ENCODE measurements at regions of chr4 and their contacts with region 1.

Region 1: DNA sequence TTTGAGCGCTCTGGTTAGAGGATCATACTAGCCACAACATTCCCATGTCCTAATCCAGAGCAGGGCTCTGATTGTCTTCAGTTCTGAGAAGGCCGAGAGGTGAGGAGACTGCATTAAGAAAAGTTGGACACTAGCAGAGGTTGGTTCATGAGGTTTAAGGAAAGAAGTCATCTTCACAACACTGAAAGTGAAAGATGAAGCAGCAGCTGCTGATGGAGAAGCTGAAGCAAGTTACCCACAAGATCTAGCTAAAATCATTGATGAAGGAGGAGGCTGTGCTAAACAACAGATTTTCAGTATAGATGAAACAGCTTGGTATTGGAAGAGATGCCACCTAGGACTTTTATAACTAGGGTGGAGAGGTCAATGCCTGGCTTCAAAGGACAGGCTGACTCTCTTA is 36.8 kb downstream of the RAP1GDS1 start:
- DNase-seq: no peak
- ATAC-seq: no peak
- H3K4me3 ChIP-seq: no peak overlapping the region
- H3K27ac ChIP-seq: no peak overlapping the region
- H3K4me1 ChIP-seq: peaks cover 0 to 22% (median 9%) of the 10 kb centered on the region in 9 donors
- H3K27me3 ChIP-seq: no peaks in the 10 kb centered on the region
- CTCF ChIP-seq: no peak

Region 2: GRCh38 chr4:98260579-98261290 is 37.3 kb before region 1 on chr4:
- intact Hi-C with region 1: loop called in 1 of 10 experiments (anchors 5 kb)
- DNase-seq: peak; percentile 96 to 97
- ATAC-seq: peak; percentile 97 to 99 (median 98)
- H3K4me3 ChIP-seq: peak overlapping the region; percentile 46 to 93 (median 82)
- H3K27ac ChIP-seq: peak overlapping the region; percentile 74 to 100 (median 98)
- H3K4me1 ChIP-seq: peaks cover 0 to 41% (median 19%) of the 10 kb centered on the region in 9 donors
- H3K27me3 ChIP-seq: no peaks in the 10 kb centered on the region
- CTCF ChIP-seq: no peak

Region 3: GRCh38 chr4:98318521-98318920 is 20.5 kb after region 1 on chr4:
- intact Hi-C with region 1: no loop called
- DNase-seq: no peak
- ATAC-seq: no peak
- H3K4me3 ChIP-seq: no peak overlapping the region
- H3K27ac ChIP-seq: no peak overlapping the region
- H3K4me1 ChIP-seq: no peaks in the 10 kb centered on the region
- H3K27me3 ChIP-seq: no peaks in the 10 kb centered on the region
- CTCF ChIP-seq: no peak